ENCODE measurements at regions of chr20 and their contacts with region 1.

Region 1: DNA sequence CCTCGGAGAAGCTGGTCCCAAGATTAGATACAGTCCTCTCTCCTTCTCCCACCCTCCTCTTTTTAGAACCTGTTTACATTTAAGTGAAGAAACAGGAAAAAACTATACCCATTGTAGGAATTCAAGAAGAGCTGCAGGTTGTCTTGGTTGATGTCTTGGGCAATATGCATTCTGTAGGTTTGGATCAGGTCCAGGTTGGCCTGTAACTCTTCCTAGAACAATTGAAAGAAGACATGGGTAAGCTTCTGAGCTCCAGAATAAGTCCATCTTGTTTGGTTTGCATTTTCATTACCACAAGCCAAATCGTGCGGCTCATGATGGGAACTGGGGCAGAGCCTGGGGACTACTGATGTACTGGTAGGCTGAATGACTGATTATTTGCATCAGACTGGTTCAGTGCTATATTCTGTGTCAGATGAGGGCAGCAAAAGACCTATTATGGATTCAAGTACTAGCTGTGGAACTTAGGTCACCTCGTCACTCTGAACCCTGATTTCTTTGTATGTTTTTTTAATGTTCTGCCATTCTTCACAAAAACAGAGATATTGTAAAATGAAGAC is 20.3 kb upstream of the SLA2 start:
- DNase-seq: no peak
- H3K4me3 ChIP-seq: no peak overlapping the region
- H3K27ac ChIP-seq: no peak overlapping the region
- H3K4me1 ChIP-seq: no peaks in the 10 kb centered on the region
- H3K27me3 ChIP-seq: no peaks in the 10 kb centered on the region
- CTCF ChIP-seq: peak; percentile 40 to 47

Region 2: DNA sequence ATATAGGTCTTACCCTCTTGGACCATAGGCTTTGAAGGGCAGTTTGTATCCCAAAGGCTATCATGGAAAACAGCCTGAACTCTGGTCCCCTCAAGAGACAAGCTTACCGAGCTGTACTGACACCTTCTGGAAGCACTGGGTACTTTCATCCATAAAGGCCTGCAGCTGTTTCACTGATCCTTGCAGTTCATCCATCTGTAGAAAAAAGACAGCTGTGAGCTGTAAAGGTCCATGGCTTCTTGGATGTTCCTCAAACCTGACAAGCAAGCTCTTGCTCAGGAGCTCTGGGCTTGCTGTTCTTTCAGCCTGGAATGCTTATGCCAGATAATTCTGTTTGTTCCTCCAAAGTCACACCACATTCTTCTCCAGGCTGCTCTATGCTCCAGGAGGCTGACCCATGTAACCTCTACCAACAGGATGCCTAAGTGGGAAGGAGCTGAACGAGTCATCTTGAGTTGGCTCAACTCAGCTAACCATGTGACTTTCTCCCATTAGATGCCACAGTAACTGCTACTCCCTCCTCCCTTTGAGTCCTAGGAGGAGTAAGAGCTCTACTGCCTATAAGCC is 88.5 kb after region 1 on chr20:
- intact Hi-C with region 1: loop called (anchors 2 kb)
- DNase-seq: no peak
- H3K4me3 ChIP-seq: no peak overlapping the region
- H3K27ac ChIP-seq: no peak overlapping the region
- H3K4me1 ChIP-seq: no peaks in the 10 kb centered on the region
- H3K27me3 ChIP-seq: no peaks in the 10 kb centered on the region
- CTCF ChIP-seq: peak; percentile 84 to 85